ENCODE measurements at regions of chr20 and their contacts with region 1.

Region 1: GRCh38 chr20:17679941-17680835 is 1.9 kb downstream of the RRBP1 start:
- DNase-seq: peak; percentile 79
- H3K4me3 ChIP-seq: peak overlapping the region; percentile 95
- H3K27ac ChIP-seq: peak overlapping the region; percentile 95
- H3K4me1 ChIP-seq: peaks cover 39% of the 10 kb centered on the region
- H3K27me3 ChIP-seq: no peaks in the 10 kb centered on the region

Region 2: DNA sequence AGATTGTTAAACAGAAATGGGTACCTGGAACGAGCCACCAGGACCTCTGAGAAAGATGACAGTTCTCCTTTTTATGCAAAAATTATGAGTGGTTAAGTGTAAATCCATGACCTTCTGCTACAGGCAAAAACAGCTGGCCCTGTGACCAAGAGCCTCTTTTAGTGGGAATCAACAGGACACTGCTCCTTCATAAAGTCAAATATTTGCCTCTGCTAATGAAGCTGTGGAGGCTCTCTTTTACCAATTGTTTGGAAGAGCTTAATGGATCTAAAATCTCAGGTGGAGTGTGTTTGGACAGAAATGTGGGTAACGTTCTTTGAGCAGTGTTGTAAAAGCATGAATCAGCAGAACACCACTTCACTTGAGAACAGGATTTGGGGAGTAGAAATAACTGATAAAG is 570.9 kb before region 1 on chr20:
- in situ Hi-C with region 1: no loop called
- DNase-seq: no peak
- H3K4me3 ChIP-seq: no peak overlapping the region
- H3K27ac ChIP-seq: no peak overlapping the region
- H3K4me1 ChIP-seq: no peaks in the 10 kb centered on the region
- H3K27me3 ChIP-seq: no peaks in the 10 kb centered on the region

Region 3: DNA sequence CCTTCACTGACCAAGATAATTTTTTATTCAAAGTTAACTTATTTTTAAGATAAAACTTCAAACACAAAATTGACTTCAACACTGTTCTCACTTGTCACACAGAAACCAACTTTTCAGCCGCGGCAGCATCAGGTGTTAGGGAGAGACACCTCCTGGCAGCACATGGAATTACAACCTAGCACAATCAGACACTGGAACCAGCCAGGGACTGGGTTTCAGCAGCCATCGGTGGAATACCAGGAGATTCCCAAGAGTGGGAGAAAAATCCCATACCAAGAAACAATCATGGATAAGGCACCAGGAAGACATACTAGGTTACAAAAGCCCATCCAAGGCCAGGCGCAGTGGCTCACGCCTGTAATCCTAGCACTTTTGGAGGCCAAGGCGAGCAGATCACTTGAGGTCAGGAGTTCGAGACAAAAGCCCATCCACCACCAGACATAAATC is 218.4 kb after region 1 on chr20:
- in situ Hi-C with region 1: loop called (anchors 10 kb)
- DNase-seq: peak; percentile 85
- H3K4me3 ChIP-seq: no peak overlapping the region
- H3K27ac ChIP-seq: no peak overlapping the region
- H3K4me1 ChIP-seq: peaks cover 18% of the 10 kb centered on the region
- H3K27me3 ChIP-seq: no peaks in the 10 kb centered on the region

Measured in GM23248 (cell line).